Astrocyte of the cerebellum (primary cell): ENCODE measurements at regions of chrX and their contacts with region 1.

Region 1: DNA sequence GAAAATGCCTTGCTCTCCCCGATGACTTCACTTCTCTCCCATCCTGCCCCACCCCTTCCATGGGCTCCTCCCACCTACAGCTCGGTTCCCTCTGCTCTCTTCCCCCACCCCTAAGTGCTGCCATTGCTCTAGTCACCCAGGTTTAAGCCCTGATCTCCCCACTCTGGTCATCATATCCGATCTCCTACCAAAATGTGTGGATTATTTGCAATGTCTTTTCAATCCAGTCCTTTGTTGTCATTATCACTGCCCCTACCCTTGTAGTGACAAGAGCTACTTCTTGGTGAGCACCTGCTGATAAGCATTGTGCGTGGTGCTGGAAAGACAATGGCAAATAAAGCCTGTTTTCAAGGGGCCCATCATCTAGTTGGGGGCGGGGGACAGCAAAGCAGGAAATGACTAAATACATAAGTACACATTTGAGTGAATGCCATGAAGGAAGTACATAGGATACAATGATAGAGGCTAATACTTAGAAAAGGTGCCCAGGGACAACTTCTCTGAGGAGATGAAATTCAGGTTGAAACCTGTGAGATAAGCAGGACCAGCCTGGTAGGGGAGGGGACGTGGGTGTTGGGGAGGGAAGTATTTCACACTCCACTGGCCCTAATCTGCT is 63.8 kb downstream of the DLG3 start:
- DNase-seq: no peak
- H3K4me3 ChIP-seq: no peak overlapping the region
- CTCF ChIP-seq: no peak

Region 2: GRCh38 chrX:70577442-70577841 is 69.0 kb after region 1 on chrX:
- in situ Hi-C with region 1: loop called (anchors 5 kb)
- DNase-seq: no peak
- H3K4me3 ChIP-seq: no peak overlapping the region
- CTCF ChIP-seq: no peak